Mammary epithelial cell (primary cell): ENCODE measurements at regions of chr7 and their contacts with region 1.

Region 1: DNA sequence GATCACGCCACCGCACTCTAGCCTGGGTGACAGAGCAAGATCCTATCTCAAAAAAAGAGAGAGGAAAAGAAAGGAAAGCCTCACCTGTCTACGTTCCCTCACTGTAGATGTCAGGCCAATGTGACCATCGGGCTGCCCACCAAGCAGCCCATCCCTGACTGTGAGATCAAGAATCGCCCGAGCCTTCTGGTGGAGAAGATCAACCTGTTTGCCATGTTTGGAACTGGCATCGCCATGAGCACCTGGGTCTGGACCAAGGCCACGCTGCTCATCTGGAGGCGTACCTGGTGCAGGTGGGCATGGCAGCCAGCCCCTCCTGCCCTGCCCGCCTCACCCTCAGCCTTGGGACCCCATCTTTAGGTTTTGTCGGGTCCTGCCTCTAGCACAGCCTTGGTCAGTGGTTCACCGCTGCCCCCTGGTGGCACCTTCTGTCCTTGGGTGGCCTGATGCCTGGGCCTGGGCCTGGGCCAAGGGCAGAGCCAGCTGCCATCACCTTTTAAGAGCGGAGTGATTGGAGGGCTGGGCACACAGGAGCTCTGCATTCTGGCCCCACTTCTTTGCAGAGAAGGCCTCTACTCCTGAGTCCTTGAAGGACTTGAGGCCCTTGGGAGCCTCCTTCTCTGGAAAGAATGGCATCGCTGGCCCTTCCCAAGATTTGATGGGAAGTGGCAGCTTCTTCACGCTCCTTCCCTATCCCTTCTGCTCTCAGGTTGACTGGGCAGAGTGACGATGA is 14.4 kb upstream of the AHCYL2 start:
- DNase-seq: peak; percentile 32
- H3K4me3 ChIP-seq: no peak overlapping the region
- H3K27ac ChIP-seq: no peak overlapping the region
- H3K4me1 ChIP-seq: no peaks in the 10 kb centered on the region
- H3K27me3 ChIP-seq: no peaks in the 10 kb centered on the region
- CTCF ChIP-seq: peak; percentile 76 to 91

Region 2: GRCh38 chr7:128904381-128905197 is 305.8 kb before region 1 on chr7:
- CTCF ChIA-PET with region 1: no interaction called
- dilution Hi-C with region 1: no loop called
- in situ Hi-C with region 1: no loop called
- intact Hi-C with region 1: loop called (anchors 1 kb)
- DNase-seq: peak; percentile 48
- H3K4me3 ChIP-seq: no peak overlapping the region
- H3K27ac ChIP-seq: no peak overlapping the region
- H3K4me1 ChIP-seq: peaks cover 15% of the 10 kb centered on the region
- H3K27me3 ChIP-seq: peaks cover 2% of the 10 kb centered on the region
- CTCF ChIP-seq: peak; percentile 70 to 72

Region 3: GRCh38 chr7:129163875-129164544 is 46.4 kb before region 1 on chr7:
- CTCF ChIA-PET with region 1: interaction called, 26 read pairs
- dilution Hi-C with region 1: loop called (anchors 5 kb)
- in situ Hi-C with region 1: loop called (anchors 5 kb)
- intact Hi-C with region 1: loop called (anchors 1 kb)
- DNase-seq: peak; percentile 21
- H3K4me3 ChIP-seq: no peak overlapping the region
- H3K27ac ChIP-seq: no peak overlapping the region
- H3K4me1 ChIP-seq: peaks cover 6% of the 10 kb centered on the region
- H3K27me3 ChIP-seq: no peaks in the 10 kb centered on the region
- CTCF ChIP-seq: peak; percentile 71 to 90

Region 4: GRCh38 chr7:129188372-129188891 is 22.0 kb before region 1 on chr7 and contains the start of gene SMO:
- CTCF ChIA-PET with region 1: no interaction called
- dilution Hi-C with region 1: no loop called
- in situ Hi-C with region 1: no loop called
- intact Hi-C with region 1: loop called (anchors 2 kb)
- DNase-seq: no peak
- H3K4me3 ChIP-seq: peak within 1 kb of the TSS; percentile 55 to 65 (median 58)
- H3K27ac ChIP-seq: no peak within 1 kb of the TSS
- H3K4me1 ChIP-seq: peaks cover 17% of the 10 kb centered on the region
- H3K27me3 ChIP-seq: no peaks in the 10 kb centered on the region
- CTCF ChIP-seq: no peak
- total RNA-seq, gene SMO: 10.4 to 15.2 TPM

Region 5: GRCh38 chr7:129298268-129298893 is 88.0 kb after region 1 on chr7:
- CTCF ChIA-PET with region 1: no interaction called
- dilution Hi-C with region 1: loop called (anchors 5 kb)
- in situ Hi-C with region 1: no loop called
- intact Hi-C with region 1: no loop called
- DNase-seq: peak; percentile 25
- H3K4me3 ChIP-seq: no peak overlapping the region
- H3K27ac ChIP-seq: no peak overlapping the region
- H3K4me1 ChIP-seq: peaks cover 6% of the 10 kb centered on the region
- H3K27me3 ChIP-seq: no peaks in the 10 kb centered on the region
- CTCF ChIP-seq: peak; percentile 77 to 80

Region 6: GRCh38 chr7:129804890-129805719 is 594.7 kb after region 1 on chr7:
- CTCF ChIA-PET with region 1: no interaction called
- dilution Hi-C with region 1: no loop called
- in situ Hi-C with region 1: no loop called
- intact Hi-C with region 1: no loop called
- DNase-seq: no peak
- H3K4me3 ChIP-seq: no peak overlapping the region
- H3K27ac ChIP-seq: no peak overlapping the region
- H3K4me1 ChIP-seq: no peaks in the 10 kb centered on the region
- H3K27me3 ChIP-seq: no peaks in the 10 kb centered on the region
- CTCF ChIP-seq: no peak